ENCODE measurements at regions of chr13 and their contacts with region 1.

Region 1: DNA sequence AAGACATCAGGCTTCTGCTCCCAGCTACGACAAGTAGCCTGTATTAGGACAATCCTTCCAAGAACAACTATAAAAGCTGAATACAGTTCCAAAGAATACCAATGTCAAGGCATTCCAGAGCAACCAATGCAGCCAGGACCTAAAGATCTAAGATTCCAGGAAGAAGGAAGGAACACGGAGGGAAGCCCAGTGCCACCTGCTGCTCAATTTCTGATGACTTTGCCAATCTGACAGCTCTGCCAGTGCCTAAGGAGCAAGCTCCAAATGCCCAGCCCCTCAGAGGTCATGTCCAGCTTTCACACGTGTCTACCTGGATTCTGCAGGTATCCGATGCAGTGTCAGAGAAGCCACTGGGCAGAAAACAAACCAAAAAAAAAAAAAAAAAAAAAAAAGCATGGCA is 164.4 kb downstream of the IRS2 start:
- DNase-seq: no peak
- H3K4me3 ChIP-seq: no peak overlapping the region
- H3K27ac ChIP-seq: no peak overlapping the region
- H3K4me1 ChIP-seq: no peaks in the 10 kb centered on the region
- H3K27me3 ChIP-seq: no peaks in the 10 kb centered on the region
- CTCF ChIP-seq: no peak
- EP300 ChIP-seq: no peak
- POLR2A ChIP-seq: no peak

Region 2: GRCh38 chr13:108742706-108743451 is 879.1 kb before region 1 on chr13:
- in situ Hi-C with region 1: no loop called
- intact Hi-C with region 1: no loop called
- DNase-seq: no peak
- H3K4me3 ChIP-seq: no peak overlapping the region
- H3K27ac ChIP-seq: no peak overlapping the region
- H3K4me1 ChIP-seq: no peaks in the 10 kb centered on the region
- H3K27me3 ChIP-seq: no peaks in the 10 kb centered on the region
- CTCF ChIP-seq: no peak
- EP300 ChIP-seq: no peak
- POLR2A ChIP-seq: no peak

Region 3: DNA sequence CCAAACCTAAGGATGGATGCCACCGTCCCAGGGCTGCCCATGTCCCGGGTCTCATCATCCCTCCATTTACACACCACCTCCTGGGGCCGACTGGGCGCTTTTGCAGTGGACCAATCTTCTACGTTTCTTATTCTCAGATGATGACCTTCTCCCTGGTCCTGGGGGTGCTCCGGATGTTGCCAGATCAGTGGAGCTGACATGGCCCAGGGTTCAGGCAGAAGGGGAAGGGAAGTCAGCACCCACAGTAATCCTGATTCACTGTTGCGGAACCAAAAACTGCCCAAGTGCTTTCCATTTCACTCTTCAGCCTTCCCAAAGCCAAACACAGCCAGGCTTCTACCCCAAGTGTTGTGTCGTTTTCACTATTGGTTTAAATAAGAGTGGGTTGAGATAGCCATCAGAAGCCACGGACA is 909.7 kb after region 1 on chr13:
- in situ Hi-C with region 1: no loop called
- intact Hi-C with region 1: loop called (anchors 5 kb)
- DNase-seq: no peak
- H3K4me3 ChIP-seq: no peak overlapping the region
- H3K27ac ChIP-seq: peak overlapping the region in 3 of 4 donors; percentile 3 to 36 (median 23)
- H3K4me1 ChIP-seq: peaks cover 13 to 36% (median 20%) of the 10 kb centered on the region in 4 donors
- H3K27me3 ChIP-seq: no peaks in the 10 kb centered on the region
- CTCF ChIP-seq: no peak
- EP300 ChIP-seq: no peak
- POLR2A ChIP-seq: no peak